OCI-LY7 (cell line): ENCODE measurements at regions of chr4 and their contacts with region 1.

Region 1: GRCh38 chr4:103091601-103092223 is 7.9 kb downstream of the BDH2 start:
- DNase-seq: peak; percentile 88
- H3K4me3 ChIP-seq: no peak overlapping the region
- H3K27ac ChIP-seq: peak overlapping the region; percentile 12
- H3K4me1 ChIP-seq: peaks cover 20% of the 10 kb centered on the region
- CTCF ChIP-seq: peak; percentile 96

Region 2: DNA sequence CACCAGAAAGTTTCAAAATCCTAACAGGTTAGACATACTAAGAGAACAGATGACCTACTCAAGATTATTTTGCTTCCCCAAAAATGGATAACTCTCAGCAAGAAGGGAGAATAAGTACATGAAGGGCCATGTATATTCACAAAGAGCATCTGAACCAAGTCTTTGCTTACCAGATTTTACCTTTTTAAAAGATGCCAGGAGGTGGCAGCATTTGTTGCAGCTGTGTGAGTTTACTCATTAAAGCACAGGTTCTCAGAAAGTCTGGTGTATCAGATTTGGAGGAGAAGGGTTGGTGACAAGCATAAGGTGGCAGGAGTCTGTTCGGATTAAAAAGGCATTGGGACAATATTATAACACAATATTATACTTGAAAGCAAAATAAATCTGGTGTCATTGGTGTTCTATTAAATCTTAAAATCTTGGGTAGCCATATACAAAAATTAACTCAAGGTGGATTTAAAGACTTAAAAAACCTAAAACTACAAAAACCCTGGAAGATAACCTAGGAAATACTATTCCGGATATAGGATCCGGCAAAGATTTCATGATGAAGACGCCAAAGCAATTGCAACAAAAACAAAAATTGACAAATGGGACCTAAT is 641.9 kb before region 1 on chr4:
- CTCF ChIA-PET with region 1: no interaction called
- POLR2A ChIA-PET with region 1: interaction called, 7 read pairs
- intact Hi-C with region 1: loop called (anchors 2 kb)
- DNase-seq: peak; percentile 68
- H3K4me3 ChIP-seq: no peak overlapping the region
- H3K27ac ChIP-seq: no peak overlapping the region
- H3K4me1 ChIP-seq: no peaks in the 10 kb centered on the region
- CTCF ChIP-seq: peak; percentile 87

Region 3: DNA sequence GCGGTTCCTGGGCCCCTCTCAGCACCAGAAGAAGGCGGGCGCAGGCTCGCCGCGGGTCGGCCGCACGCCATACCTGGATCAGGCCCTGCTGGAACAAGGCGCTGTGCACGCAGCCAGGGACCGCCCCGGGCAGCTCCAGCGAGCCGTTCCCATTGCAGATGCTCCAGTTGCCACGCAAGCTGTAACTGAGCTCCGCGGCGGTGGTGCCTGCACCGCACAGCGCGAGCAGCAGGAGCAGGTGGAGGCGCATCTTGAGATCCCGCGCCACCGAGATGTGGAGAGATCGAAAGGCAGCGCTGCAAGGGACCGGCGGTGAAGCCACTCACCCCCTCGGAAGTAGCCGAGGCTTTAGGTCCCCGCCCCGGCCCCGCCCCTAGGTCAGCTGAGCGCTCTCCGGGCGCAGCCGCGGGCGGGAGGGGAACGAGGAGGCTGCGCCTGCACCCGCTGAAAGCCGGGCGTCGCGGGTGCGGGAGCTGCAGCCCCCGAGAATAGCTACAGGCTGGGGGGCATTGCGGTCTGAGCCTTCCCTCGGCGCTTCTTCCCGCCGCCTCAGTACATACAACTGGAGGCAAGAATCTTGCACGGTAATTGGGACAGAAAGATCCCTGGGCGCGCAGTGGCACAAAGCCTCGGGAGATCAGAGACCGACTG is 330.9 kb before region 1 on chr4 and contains the start of gene MANBA:
- CTCF ChIA-PET with region 1: no interaction called
- POLR2A ChIA-PET with region 1: interaction called, 4 read pairs
- intact Hi-C with region 1: loop called (anchors 5 kb)
- DNase-seq: peak; percentile 91
- H3K4me3 ChIP-seq: peak within 1 kb of the TSS; percentile 74
- H3K27ac ChIP-seq: peak within 1 kb of the TSS; percentile 40
- H3K4me1 ChIP-seq: peaks cover 17% of the 10 kb centered on the region
- CTCF ChIP-seq: no peak
- total RNA-seq, gene MANBA: 15.8 and 30.0 TPM in 2 replicates

Region 4: DNA sequence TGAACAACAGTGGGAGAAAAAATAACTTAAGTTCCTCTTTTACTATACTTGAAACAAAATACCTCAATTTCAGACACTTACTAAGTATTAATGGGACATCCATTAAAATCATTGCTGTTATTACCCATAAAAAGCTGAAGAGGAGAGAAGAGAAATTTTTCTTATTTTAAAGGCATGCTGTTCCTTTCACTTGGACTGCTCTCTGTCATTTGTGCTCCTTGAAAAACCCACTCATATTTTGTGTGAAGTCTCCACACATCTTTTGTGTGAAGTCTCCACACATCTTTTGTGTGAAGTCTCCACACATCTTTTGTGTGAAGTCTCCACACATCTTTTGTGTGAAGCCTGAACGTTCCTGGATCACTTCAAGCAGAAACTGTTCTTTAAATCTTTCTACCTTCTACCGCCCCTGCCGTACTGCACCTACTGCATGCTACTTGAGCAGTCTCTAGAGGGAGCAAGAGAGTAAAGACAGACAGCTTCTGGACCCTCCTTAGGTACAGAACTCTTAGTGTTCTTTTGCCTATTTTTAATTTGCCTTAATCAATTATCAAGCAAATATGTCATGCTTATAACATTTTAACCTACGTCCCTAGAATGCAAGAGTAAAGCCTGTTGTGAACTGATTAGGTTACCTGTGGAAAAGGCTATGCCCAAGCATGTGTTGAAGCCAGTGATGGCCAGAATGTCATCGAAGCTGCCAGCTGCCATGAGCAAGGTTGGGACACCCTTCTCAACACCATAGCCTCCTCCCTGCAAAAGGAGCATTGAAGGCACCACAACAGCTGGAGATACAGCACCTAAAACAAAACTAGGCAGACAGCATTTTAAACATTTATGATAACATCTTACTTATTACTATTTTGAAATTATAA is 45.1 kb before region 1 on chr4:
- CTCF ChIA-PET with region 1: interaction called, 4 read pairs
- POLR2A ChIA-PET with region 1: interaction called, 8 read pairs
- intact Hi-C with region 1: loop called (anchors 1 kb)
- DNase-seq: peak; percentile 72
- H3K4me3 ChIP-seq: no peak overlapping the region
- H3K27ac ChIP-seq: no peak overlapping the region
- H3K4me1 ChIP-seq: no peaks in the 10 kb centered on the region
- CTCF ChIP-seq: peak; percentile 91

Region 5: GRCh38 chr4:103198111-103198765 is 106.5 kb after region 1 on chr4 and contains the start of gene CENPE:
- CTCF ChIA-PET with region 1: no interaction called
- POLR2A ChIA-PET with region 1: no interaction called
- intact Hi-C with region 1: no loop called
- DNase-seq: peak; percentile 92
- H3K4me3 ChIP-seq: peak within 1 kb of the TSS; percentile 86
- H3K27ac ChIP-seq: peak within 1 kb of the TSS; percentile 41
- H3K4me1 ChIP-seq: peaks cover 20% of the 10 kb centered on the region
- CTCF ChIP-seq: no peak
- total RNA-seq, gene CENPE: 23.6 and 39.4 TPM in 2 replicates